Body of pancreas (tissue), 4 donors: ENCODE measurements at regions of chr9 and their contacts with region 1.

Region 1: DNA sequence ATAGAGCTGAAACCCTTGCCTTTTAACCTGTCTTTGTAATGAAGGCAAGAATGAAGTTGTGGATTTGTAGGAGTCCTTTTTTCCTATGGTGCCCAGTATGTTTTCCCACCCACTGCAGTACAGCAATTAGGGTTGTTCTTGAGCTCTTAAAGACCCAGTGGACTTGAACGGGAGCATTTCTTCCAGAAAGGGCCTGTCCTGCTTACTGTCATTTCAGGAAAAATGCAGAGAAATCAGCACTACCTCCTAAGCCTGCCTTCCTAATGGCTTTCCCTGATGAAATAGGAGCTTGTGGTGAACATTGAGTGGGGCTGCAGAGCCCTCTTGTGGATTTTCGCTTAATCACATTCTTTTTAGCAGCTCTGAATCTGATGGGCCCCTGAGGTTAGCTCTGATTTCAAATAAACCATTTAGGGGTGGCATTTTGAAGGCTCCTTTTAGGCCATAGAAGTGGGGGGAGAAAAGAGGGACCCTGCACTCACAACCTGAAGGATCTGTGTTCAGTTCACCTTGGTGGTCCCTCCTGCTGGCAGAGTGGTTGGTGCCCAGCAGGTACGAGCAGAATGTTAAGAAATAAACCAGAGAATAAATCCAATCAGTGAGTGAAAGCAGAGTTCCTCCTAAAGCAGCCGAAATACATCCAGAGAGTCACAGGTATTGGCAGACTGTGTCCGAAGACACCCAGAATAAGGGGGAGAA is 188.0 kb upstream of the KLF9 start:
- DNase-seq: peak; percentile 61 to 75 (median 64)
- ATAC-seq: peak; percentile 72
- H3K4me3 ChIP-seq: no peak overlapping the region
- H3K27ac ChIP-seq: peak overlapping the region in 3 of 4 donors; percentile 48 to 71 (median 65)
- H3K4me1 ChIP-seq: peaks cover 20% of the 10 kb centered on the region
- H3K27me3 ChIP-seq: no peaks in the 10 kb centered on the region
- CTCF ChIP-seq: peak; percentile 61 to 94 (median 86)
- POLR2A ChIP-seq: peak in 1 of 3 donors; percentile 13

Region 2: GRCh38 chr9:70340572-70340971 is 261.9 kb before region 1 on chr9:
- intact Hi-C with region 1: loop called (anchors 10 kb)
- DNase-seq: no peak
- ATAC-seq: no peak
- H3K4me3 ChIP-seq: no peak overlapping the region
- H3K27ac ChIP-seq: no peak overlapping the region
- H3K4me1 ChIP-seq: no peaks in the 10 kb centered on the region
- H3K27me3 ChIP-seq: no peaks in the 10 kb centered on the region
- CTCF ChIP-seq: peak in 6 of 7 experiments; percentile 31 to 63 (median 54)
- POLR2A ChIP-seq: no peak

Region 3: GRCh38 chr9:70451765-70452164 is 150.7 kb before region 1 on chr9:
- intact Hi-C with region 1: no loop called
- DNase-seq: no peak
- ATAC-seq: no peak
- H3K4me3 ChIP-seq: no peak overlapping the region
- H3K27ac ChIP-seq: no peak overlapping the region
- H3K4me1 ChIP-seq: peaks cover 15% of the 10 kb centered on the region
- H3K27me3 ChIP-seq: no peaks in the 10 kb centered on the region
- CTCF ChIP-seq: no peak
- POLR2A ChIP-seq: no peak